GM10248 (cell line): ENCODE measurements at regions of chr11 and their contacts with region 1.

Region 1: DNA sequence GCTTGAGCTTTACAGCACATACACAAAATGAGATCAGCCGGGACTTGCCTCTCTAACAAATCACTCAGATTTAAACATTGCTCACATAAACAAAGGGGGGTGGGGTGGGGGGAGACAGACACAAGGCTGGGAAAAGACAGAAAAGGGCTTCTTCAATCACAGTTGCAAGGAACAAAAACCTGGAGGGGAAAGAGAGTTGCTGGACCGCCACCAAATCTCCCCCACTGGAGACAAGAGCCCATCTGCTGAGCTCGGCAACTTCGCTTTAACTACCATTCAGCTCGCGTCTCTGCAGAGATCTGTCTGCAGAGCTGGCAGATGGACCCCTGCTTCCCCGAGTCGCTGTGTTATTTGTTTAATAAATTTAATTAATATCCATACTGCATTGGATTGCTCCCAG is 165.0 kb downstream of the RCN1 start:
- DNase-seq: no peak
- CTCF ChIP-seq: no peak

Region 2: DNA sequence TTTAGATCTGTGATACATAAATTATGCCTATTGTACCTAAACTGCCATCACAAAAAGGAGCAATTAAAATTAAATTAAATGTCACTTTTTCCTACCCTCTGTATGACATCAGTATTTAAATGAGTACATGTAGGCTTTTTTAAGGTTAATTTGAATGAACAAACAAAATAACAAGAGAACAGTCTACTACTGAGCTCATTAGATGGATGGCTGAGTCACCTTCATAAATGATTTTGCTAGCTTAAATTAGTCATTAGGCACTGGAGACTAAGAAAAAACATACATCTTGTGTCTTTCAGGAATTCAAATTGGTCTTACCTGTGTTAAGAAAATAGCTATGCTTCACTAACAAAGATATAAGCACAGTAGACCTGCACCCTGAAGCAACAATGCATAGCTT is 11.4 kb before region 1 on chr11:
- CTCF ChIA-PET with region 1: interaction called, 19 read pairs
- POLR2A ChIA-PET with region 1: no interaction called
- DNase-seq: no peak
- CTCF ChIP-seq: no peak